Activated B cell treated with CpG ODN at 0.5 μM for 24 hours (primary cell): ENCODE measurements at regions of chr4 and their contacts with region 1.

Region 1: DNA sequence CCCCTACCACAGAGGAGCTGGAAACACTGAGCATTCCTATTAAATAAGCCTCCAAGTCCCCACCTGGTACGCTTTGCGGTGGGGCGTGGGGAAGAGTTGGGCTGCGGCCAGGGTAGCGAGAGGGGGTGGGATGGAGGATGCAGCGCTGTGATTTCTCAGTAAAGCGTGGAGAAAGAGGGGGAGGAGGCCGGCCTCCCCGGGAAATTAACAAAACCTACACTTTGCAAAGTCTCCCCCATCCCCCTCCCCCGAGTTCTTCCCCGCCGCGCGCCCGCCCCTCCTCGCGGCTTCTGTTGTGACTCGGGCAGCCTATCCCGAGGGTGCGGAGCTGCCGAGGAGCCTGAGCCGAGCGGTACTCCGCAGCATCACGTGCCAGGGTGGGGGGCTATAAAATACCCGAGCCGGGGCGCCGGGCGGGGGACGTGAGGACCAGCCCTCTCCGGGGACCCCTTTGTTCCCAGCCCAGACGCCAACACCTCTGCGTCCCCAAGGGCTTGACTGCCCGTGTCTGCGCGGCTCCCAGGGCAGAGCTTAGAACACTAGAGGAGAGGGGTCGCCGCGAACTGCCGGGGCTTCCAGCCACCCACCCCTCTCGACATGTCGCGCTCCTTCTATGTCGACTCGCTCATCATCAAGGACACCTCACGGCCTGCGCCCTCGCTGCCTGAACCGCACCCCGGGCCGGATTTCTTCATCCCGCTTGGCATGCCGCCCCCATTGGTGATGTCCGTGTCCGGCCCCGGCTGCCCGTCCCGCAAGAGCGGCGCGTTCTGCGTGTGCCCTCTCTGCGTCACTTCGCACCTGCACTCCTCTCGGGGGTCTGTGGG is at the start of gene GSX2:
- DNase-seq: no peak
- ATAC-seq: peak; percentile 16
- H3K4me3 Mint-ChIP-seq: peak within 1 kb of the TSS; percentile 64
- H3K27ac Mint-ChIP-seq: no peak within 1 kb of the TSS
- H3K4me1 Mint-ChIP-seq: peaks cover 52% of the 10 kb centered on the region
- H3K27me3 Mint-ChIP-seq: peaks cover 77% of the 10 kb centered on the region
- CTCF ChIP-seq: no peak
- total RNA-seq, gene GSX2: not detected in 2 replicates

Region 2: GRCh38 chr4:54032558-54033135 is 67.3 kb before region 1 on chr4:
- CTCF ChIA-PET with region 1: no interaction called
- POLR2A ChIA-PET with region 1: no interaction called
- intact Hi-C with region 1: no loop called
- DNase-seq: no peak
- ATAC-seq: no peak
- H3K4me3 Mint-ChIP-seq: peak overlapping the region; percentile 64
- H3K27ac Mint-ChIP-seq: no peak overlapping the region
- H3K4me1 Mint-ChIP-seq: peaks cover 8% of the 10 kb centered on the region
- H3K27me3 Mint-ChIP-seq: no peaks in the 10 kb centered on the region
- CTCF ChIP-seq: no peak

Region 3: GRCh38 chr4:54056360-54056759 is 43.6 kb before region 1 on chr4:
- CTCF ChIA-PET with region 1: no interaction called
- POLR2A ChIA-PET with region 1: no interaction called
- intact Hi-C with region 1: loop called (anchors 2 kb)
- DNase-seq: no peak
- ATAC-seq: no peak
- H3K4me3 Mint-ChIP-seq: no peak overlapping the region
- H3K27ac Mint-ChIP-seq: no peak overlapping the region
- H3K4me1 Mint-ChIP-seq: peaks cover 59% of the 10 kb centered on the region
- H3K27me3 Mint-ChIP-seq: no peaks in the 10 kb centered on the region
- CTCF ChIP-seq: no peak

Region 4: DNA sequence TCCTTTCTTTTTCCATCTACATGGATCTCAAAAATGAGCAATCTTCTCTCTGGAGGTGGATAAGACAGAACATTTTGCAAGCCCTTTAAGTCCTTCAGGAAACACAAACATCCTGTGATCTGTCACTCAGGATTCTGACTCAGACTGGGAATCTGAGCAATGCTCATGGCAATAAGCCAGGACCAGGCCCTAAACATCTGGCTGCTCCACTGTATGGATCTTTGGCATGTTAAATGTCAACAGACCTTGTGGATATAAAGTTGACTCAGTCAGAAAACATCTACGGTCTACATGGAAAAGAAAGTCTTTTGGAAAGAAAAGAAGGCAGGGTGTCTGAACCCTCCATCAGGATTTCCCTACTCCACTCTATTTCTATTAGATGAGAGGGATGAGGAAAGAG is 17.8 kb before region 1 on chr4:
- CTCF ChIA-PET with region 1: no interaction called
- POLR2A ChIA-PET with region 1: no interaction called
- intact Hi-C with region 1: no loop called
- DNase-seq: no peak
- ATAC-seq: no peak
- H3K4me3 Mint-ChIP-seq: no peak overlapping the region
- H3K27ac Mint-ChIP-seq: no peak overlapping the region
- H3K4me1 Mint-ChIP-seq: no peaks in the 10 kb centered on the region
- H3K27me3 Mint-ChIP-seq: peaks cover 8% of the 10 kb centered on the region
- CTCF ChIP-seq: no peak

Region 5: GRCh38 chr4:54149323-54149722 is 49.4 kb after region 1 on chr4:
- CTCF ChIA-PET with region 1: no interaction called
- POLR2A ChIA-PET with region 1: no interaction called
- intact Hi-C with region 1: no loop called
- DNase-seq: no peak
- ATAC-seq: no peak
- H3K4me3 Mint-ChIP-seq: no peak overlapping the region
- H3K27ac Mint-ChIP-seq: no peak overlapping the region
- H3K4me1 Mint-ChIP-seq: no peaks in the 10 kb centered on the region
- H3K27me3 Mint-ChIP-seq: peaks cover 2% of the 10 kb centered on the region
- CTCF ChIP-seq: no peak

Region 6: GRCh38 chr4:54645830-54646229 is 545.9 kb after region 1 on chr4:
- CTCF ChIA-PET with region 1: no interaction called
- POLR2A ChIA-PET with region 1: no interaction called
- intact Hi-C with region 1: no loop called
- DNase-seq: no peak
- ATAC-seq: no peak
- H3K4me3 Mint-ChIP-seq: no peak overlapping the region
- H3K27ac Mint-ChIP-seq: no peak overlapping the region
- H3K4me1 Mint-ChIP-seq: no peaks in the 10 kb centered on the region
- H3K27me3 Mint-ChIP-seq: peaks cover 4% of the 10 kb centered on the region
- CTCF ChIP-seq: no peak